ENCODE measurements at regions of chr3 and their contacts with region 1.

Region 1: GRCh38 chr3:128969993-128970739 is 23.7 kb downstream of the CFAP92 start:
- DNase-seq: no peak
- ATAC-seq: no peak
- H3K4me3 ChIP-seq: no peak overlapping the region
- H3K27ac ChIP-seq: no peak overlapping the region
- H3K4me1 ChIP-seq: peaks cover 11 to 21% of the 10 kb centered on the region in 2 donors
- H3K27me3 ChIP-seq: no peaks in the 10 kb centered on the region
- CTCF ChIP-seq: peak; percentile 74 to 94 (median 81)
- POLR2A ChIP-seq: no peak

Region 2: DNA sequence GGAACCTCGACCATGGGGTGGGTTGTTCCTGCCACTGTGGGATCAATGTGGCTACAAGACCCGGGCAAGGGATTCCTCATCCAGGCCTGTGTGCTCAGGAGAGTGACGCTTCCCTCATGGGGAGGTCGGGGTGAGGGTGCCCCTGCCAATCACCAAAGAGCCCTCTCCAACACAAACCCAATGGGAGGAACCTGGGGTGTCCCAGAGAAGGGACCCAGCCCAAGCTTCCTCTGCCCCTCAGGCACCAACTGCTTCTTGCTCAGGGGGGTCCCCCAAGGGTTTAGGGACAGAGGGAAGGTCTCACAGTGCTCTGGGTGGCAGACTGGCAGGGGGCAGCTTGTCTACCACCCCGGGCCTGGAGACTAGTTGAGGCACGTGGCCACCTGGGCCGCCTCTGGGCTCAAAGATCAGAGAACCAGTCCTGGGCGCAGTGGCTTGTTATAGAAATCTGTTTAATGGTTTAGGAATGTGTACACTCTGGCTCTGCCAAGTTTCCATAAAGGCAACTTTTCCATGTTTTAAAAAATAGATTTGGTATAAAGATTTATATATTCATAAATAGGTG is 117.1 kb after region 1 on chr3:
- in situ Hi-C with region 1: loop called in 1 of 4 experiments (anchors 25 kb)
- intact Hi-C with region 1: no loop called
- DNase-seq: no peak
- ATAC-seq: peak in 1 of 2 donors; percentile 54
- H3K4me3 ChIP-seq: no peak overlapping the region
- H3K27ac ChIP-seq: peak overlapping the region; percentile 50 to 70 (median 52)
- H3K4me1 ChIP-seq: peaks cover 6 to 7% of the 10 kb centered on the region in 2 donors
- H3K27me3 ChIP-seq: no peaks in the 10 kb centered on the region
- CTCF ChIP-seq: no peak
- POLR2A ChIP-seq: no peak

Region 3: DNA sequence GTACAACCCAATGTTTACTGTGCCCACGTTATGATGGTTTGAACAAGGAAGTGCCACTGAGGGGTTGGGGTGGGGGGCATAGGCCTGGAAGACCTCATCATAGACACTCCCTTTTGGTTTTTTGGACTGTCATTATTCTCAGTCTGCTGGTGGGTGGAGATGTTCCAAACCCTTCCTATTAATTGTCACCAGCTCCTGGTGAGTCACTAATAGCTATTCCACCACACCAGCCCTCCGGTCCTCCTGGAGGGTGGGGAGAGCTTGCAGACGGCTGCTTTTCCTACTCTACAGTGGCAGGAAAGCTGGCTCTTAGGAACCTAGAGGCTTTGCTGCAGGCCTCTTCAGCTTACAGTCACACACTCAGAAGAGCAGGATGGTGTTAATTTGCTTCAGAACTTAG is 270.3 kb after region 1 on chr3:
- in situ Hi-C with region 1: loop called (anchors 5 to 10 kb)
- intact Hi-C with region 1: loop called (anchors 1 kb)
- DNase-seq: no peak
- ATAC-seq: no peak
- H3K4me3 ChIP-seq: no peak overlapping the region
- H3K27ac ChIP-seq: no peak overlapping the region
- H3K4me1 ChIP-seq: peaks cover 5% of the 10 kb centered on the region in 2 donors
- H3K27me3 ChIP-seq: no peaks in the 10 kb centered on the region
- CTCF ChIP-seq: no peak
- POLR2A ChIP-seq: no peak